Natural killer cell (primary cell): ENCODE measurements at regions of chr17 and their contacts with region 1.

Region 1: DNA sequence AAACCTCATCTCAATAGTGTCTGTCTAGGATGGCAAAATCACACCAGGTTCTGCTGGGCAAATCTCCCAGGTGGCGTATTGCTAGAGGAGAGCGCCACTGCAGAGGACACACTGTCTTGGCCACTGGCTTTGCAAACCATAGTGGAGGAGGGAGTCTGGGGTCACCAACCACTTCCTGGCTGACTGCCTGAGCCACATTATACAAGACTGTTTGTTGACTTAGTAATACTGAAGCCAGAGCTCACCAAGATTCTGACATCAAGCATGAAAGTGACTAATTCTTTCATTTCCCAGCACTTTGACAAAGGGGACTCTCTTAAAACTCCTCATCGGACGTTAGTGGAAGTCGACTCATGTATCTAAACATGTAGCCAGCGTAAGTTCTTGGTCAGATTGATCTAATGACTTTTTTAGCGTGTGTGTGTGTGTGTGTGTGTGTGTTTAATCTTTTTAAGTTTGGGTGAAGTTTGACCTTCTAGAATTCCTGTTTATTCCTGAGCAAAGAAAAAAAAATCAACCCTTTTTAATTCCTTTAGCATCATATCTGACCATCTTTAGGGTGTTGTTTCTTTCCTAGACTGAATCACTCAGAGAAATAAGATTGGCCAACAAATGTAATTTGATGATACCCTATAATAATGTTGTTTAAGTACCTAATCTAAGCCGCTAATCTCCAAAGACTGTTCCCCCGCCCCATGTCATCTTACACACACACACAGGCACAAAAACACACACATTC is 13.7 kb downstream of the PITPNC1 start:
- DNase-seq: peak; percentile 75
- ATAC-seq: peak; percentile 77 to 92 (median 88)
- H3K4me3 ChIP-seq: peak overlapping the region; percentile 30
- H3K4me3 Mint-ChIP-seq: peak overlapping the region; percentile 89
- H3K27ac ChIP-seq: peak overlapping the region; percentile 91
- H3K27ac Mint-ChIP-seq: peak overlapping the region; percentile 96 to 99
- H3K4me1 ChIP-seq: peaks cover 82% of the 10 kb centered on the region
- H3K4me1 Mint-ChIP-seq: peaks cover 84 to 87% of the 10 kb centered on the region in 2 donors
- H3K27me3 ChIP-seq: no peaks in the 10 kb centered on the region
- H3K27me3 Mint-ChIP-seq: no peaks in the 10 kb centered on the region
- CTCF ChIP-seq: no peak

Region 2: DNA sequence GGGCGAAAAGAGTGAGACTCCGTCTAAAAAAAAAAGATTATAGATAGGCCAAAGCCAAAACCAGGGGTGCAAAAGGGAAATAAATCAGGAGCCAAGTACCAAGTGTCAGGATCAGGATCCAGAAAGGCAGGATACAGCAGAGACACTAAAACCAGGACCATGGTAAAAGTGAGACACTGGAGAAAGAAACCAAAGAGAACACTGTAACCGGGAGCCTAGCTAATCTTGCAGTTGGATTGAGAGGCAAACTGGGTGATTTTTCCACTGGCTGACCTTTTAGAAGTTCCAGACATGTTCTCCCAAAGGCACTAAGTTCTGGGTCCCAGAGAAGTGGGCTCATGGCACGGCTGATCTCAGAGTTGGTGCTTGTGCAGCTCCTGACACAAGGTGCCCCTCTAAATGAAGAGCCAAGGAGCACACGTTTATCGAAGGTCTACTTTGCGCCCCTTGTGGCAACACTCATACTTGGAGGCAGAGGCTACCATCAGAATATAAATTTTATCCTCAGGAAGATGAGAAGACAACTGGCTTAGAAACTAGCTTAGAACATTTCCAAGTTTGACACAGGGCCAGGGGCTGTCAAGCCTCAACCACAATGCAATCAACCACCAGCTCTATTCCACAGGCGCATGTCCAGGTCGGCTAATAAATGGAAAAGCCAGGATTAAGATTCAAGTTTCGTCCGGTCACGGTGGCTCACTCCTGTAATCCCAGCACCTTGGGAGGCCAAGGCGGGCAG is 118.3 kb before region 1 on chr17:
- intact Hi-C with region 1: no loop called
- DNase-seq: peak in 1 of 2 donors; percentile 46
- ATAC-seq: peak in 2 of 3 donors; percentile 40 to 68
- H3K4me3 ChIP-seq: no peak overlapping the region
- H3K4me3 Mint-ChIP-seq: no peak overlapping the region
- H3K27ac ChIP-seq: no peak overlapping the region
- H3K27ac Mint-ChIP-seq: no peak overlapping the region
- H3K4me1 ChIP-seq: peaks cover 4% of the 10 kb centered on the region
- H3K4me1 Mint-ChIP-seq: peaks cover 5 to 6% of the 10 kb centered on the region in 2 donors
- H3K27me3 ChIP-seq: no peaks in the 10 kb centered on the region
- H3K27me3 Mint-ChIP-seq: no peaks in the 10 kb centered on the region
- CTCF ChIP-seq: peak; percentile 21

Region 3: GRCh38 chr17:67401598-67402488 is 11.0 kb after region 1 on chr17:
- intact Hi-C with region 1: loop called (anchors 1 kb)
- DNase-seq: peak in 1 of 2 donors; percentile 33
- ATAC-seq: peak in 2 of 3 donors; percentile 21 to 32
- H3K4me3 ChIP-seq: no peak overlapping the region
- H3K4me3 Mint-ChIP-seq: peak overlapping the region; percentile 75
- H3K27ac ChIP-seq: peak overlapping the region; percentile 86
- H3K27ac Mint-ChIP-seq: peak overlapping the region; percentile 93 to 97
- H3K4me1 ChIP-seq: peaks cover 48% of the 10 kb centered on the region
- H3K4me1 Mint-ChIP-seq: peaks cover 66 to 80% of the 10 kb centered on the region in 2 donors
- H3K27me3 ChIP-seq: no peaks in the 10 kb centered on the region
- H3K27me3 Mint-ChIP-seq: no peaks in the 10 kb centered on the region
- CTCF ChIP-seq: no peak

Region 4: DNA sequence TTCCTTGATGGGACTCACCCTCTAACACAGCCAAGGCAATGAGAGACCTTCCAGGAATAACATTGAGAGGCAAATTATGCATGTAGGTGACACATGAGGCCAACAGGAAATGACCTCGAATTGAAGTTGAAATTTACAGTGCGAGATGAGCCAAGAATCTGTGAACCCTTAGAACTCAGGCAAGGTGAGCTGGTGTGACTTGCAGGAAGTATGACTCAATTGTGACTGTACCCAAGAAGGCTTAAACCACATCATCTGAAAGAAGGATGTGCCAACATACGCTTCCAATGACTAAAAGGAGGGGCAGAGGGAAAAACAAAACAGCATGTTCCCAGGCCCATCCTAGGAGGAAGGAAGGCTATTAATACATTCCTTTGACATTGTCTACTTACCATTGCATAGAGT is 31.1 kb after region 1 on chr17:
- intact Hi-C with region 1: loop called (anchors 1 kb)
- DNase-seq: peak in 1 of 2 donors; percentile 93
- ATAC-seq: peak; percentile 87 to 95 (median 95)
- H3K4me3 ChIP-seq: no peak overlapping the region
- H3K4me3 Mint-ChIP-seq: peak overlapping the region; percentile 67
- H3K27ac ChIP-seq: peak overlapping the region; percentile 80
- H3K27ac Mint-ChIP-seq: peak overlapping the region; percentile 88
- H3K4me1 ChIP-seq: peaks cover 62% of the 10 kb centered on the region
- H3K4me1 Mint-ChIP-seq: peaks cover 81 to 89% of the 10 kb centered on the region in 2 donors
- H3K27me3 ChIP-seq: no peaks in the 10 kb centered on the region
- H3K27me3 Mint-ChIP-seq: no peaks in the 10 kb centered on the region
- CTCF ChIP-seq: no peak

Region 5: DNA sequence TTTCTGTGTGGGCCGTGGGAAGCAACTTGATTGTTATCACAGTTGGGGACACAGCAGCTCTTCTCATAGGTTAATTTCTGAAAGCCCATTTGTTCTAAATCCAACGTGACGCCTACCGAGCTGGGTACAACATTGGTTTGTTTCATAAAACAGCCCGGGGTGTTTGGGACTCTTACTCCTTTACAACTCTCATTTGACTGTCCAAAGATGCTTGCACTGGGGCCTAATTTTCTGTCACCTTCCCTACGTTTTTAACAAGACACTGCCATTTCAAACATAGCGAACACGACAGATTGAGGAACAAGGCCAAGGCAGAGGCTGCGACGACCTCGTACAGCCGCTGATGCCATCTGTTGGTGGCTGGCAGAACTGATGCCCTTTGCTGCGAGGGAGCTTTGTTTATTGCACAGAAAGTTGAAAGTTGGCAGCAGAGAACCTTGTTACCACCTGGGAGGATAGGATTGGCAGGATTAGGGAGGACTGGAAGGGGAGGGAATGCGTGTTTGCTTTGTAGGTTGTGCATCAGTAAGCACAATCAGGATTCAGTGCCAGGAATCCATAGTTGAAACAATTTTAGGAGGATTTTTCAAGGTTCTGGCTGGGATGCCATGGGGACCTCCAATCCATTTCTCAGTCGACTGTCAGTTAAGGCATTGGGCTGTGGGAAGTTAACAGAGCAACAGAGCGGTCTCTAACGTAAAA is 84.6 kb after region 1 on chr17:
- intact Hi-C with region 1: loop called (anchors 2 kb)
- DNase-seq: peak; percentile 79 to 95
- ATAC-seq: peak; percentile 78 to 95 (median 85)
- H3K4me3 ChIP-seq: no peak overlapping the region
- H3K4me3 Mint-ChIP-seq: peak overlapping the region; percentile 65
- H3K27ac ChIP-seq: peak overlapping the region; percentile 83
- H3K27ac Mint-ChIP-seq: peak overlapping the region; percentile 89 to 94
- H3K4me1 ChIP-seq: peaks cover 66% of the 10 kb centered on the region
- H3K4me1 Mint-ChIP-seq: peaks cover 61 to 62% of the 10 kb centered on the region in 2 donors
- H3K27me3 ChIP-seq: no peaks in the 10 kb centered on the region
- H3K27me3 Mint-ChIP-seq: no peaks in the 10 kb centered on the region
- CTCF ChIP-seq: peak; percentile 91